PC-9 (cell line): ENCODE measurements at regions of chr5 and their contacts with region 1.

Region 1: DNA sequence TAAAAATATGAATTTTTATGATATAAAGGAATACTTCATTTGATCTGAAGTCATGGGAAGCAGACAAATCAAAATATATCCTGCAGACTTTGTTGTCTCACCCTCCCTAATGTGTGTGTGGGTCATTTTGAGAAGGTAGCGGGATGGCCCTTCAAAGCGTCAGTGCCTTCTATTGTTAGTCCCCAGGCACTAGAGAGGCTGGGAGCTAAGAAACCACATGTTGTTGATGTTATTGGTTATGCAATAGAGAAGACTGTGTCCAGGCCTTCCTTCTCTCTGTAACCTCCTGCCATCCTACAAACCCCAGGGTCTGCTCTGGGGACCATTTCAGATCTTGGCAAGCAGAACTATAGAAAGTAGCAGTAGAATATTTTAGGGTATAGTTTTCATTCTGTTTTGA is 94.7 kb downstream of the NLN start:
- DNase-seq: no peak
- H3K4me3 ChIP-seq: no peak overlapping the region
- H3K27ac ChIP-seq: no peak overlapping the region
- H3K4me1 ChIP-seq: peaks cover 33% of the 10 kb centered on the region
- H3K27me3 ChIP-seq: no peaks in the 10 kb centered on the region
- CTCF ChIP-seq: no peak

Region 2: GRCh38 chr5:66057239-66057638 is 240.5 kb after region 1 on chr5:
- CTCF ChIA-PET with region 1: no interaction called
- POLR2A ChIA-PET with region 1: interaction called, 17 read pairs
- intact Hi-C with region 1: no loop called
- DNase-seq: no peak
- H3K4me3 ChIP-seq: no peak overlapping the region
- H3K27ac ChIP-seq: no peak overlapping the region
- H3K4me1 ChIP-seq: no peaks in the 10 kb centered on the region
- H3K27me3 ChIP-seq: no peaks in the 10 kb centered on the region
- CTCF ChIP-seq: no peak